Common myeloid progenitor, CD34-positive (primary cell): ENCODE measurements at regions of chr19 and their contacts with region 1.

Region 1: DNA sequence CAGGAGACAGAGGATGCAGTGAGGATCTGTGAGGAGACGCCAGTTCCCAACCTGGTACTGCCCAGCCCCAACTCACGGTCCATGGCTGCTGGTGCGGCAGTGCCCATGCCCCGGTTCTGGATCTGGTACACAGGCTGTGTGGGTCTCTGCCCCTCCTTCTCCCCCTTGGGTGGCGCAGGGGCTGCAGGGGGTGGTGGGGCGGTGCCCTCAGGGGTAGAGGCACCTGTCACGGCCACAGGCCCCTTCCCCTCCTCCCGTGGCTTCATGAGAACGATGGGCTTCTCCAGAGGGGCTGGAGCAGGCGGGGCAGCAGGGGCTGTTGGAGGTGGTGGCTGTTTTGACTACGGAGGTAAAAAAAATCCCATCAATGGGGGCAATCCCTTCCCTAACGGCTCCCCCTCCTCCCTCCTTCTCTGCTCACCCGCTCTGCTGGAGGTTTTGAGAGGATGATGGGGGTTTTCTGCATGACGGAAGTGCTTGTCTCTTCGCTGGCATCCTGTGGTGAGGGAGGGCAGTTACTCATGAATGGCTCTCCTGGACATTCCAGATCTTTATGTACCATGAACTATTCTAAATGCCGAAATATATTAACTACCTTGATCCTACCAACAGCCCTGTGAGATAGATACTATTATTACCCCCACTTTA is 7.1 kb downstream of the SMG9 start:
- DNase-seq: no peak
- H3K4me3 ChIP-seq: no peak overlapping the region
- H3K27ac ChIP-seq: no peak overlapping the region
- H3K4me1 ChIP-seq: peaks cover 3 to 9% (median 6%) of the 10 kb centered on the region in 4 experiments
- H3K27me3 ChIP-seq: no peaks in the 10 kb centered on the region

Region 2: GRCh38 chr19:43774103-43774939 is 26.6 kb after region 1 on chr19:
- CTCF ChIA-PET with region 1: interaction called, 65 read pairs
- POLR2A ChIA-PET with region 1: interaction called, 4 read pairs
- DNase-seq: peak; percentile 73 to 87 (median 84)
- H3K4me3 ChIP-seq: peak overlapping the region in 4 of 7 experiments; percentile 4 to 45 (median 17)
- H3K27ac ChIP-seq: peak overlapping the region in 1 of 2 experiments; percentile 90
- H3K4me1 ChIP-seq: peaks cover 8 to 58% (median 51%) of the 10 kb centered on the region in 4 experiments
- H3K27me3 ChIP-seq: no peaks in the 10 kb centered on the region

Region 3: GRCh38 chr19:43784981-43785808 is 37.5 kb after region 1 on chr19:
- CTCF ChIA-PET with region 1: interaction called, 27 read pairs
- POLR2A ChIA-PET with region 1: no interaction called
- DNase-seq: peak; percentile 68 to 76 (median 72)
- H3K4me3 ChIP-seq: peak overlapping the region in 2 of 7 experiments; percentile 7 to 43
- H3K27ac ChIP-seq: peak overlapping the region in 1 of 2 experiments; percentile 62
- H3K4me1 ChIP-seq: peaks cover 0 to 31% (median 18%) of the 10 kb centered on the region in 4 experiments
- H3K27me3 ChIP-seq: no peaks in the 10 kb centered on the region

Region 4: GRCh38 chr19:43809762-43810696 is 62.3 kb after region 1 on chr19:
- CTCF ChIA-PET with region 1: interaction called, 10 read pairs
- POLR2A ChIA-PET with region 1: no interaction called
- DNase-seq: peak; percentile 72 to 88 (median 86)
- H3K4me3 ChIP-seq: no peak overlapping the region
- H3K27ac ChIP-seq: no peak overlapping the region
- H3K4me1 ChIP-seq: no peaks in the 10 kb centered on the region
- H3K27me3 ChIP-seq: peaks cover 0 to 2% (median 0%) of the 10 kb centered on the region in 5 experiments